Activated CD4-positive, alpha-beta T cell treated with anti-CD3 and anti-CD28 coated beads for 36 hours (primary cell): ENCODE measurements at regions of chr12 and their contacts with region 1.

Region 1: GRCh38 chr12:12916135-12916944 is 25.0 kb downstream of the GPRC5A start:
- DNase-seq: peak; percentile 91
- ATAC-seq: peak; percentile 97
- H3K4me3 Mint-ChIP-seq: no peak overlapping the region
- H3K27ac Mint-ChIP-seq: no peak overlapping the region
- H3K4me1 Mint-ChIP-seq: peaks cover 7% of the 10 kb centered on the region
- H3K27me3 Mint-ChIP-seq: peaks cover 12% of the 10 kb centered on the region

Region 2: GRCh38 chr12:12673296-12673695 is 243.0 kb before region 1 on chr12:
- CTCF ChIA-PET with region 1: no interaction called
- POLR2A ChIA-PET with region 1: no interaction called
- intact Hi-C with region 1: no loop called
- DNase-seq: peak; percentile 47
- ATAC-seq: peak; percentile 91
- H3K4me3 Mint-ChIP-seq: no peak overlapping the region
- H3K27ac Mint-ChIP-seq: peak overlapping the region; percentile 52
- H3K4me1 Mint-ChIP-seq: peaks cover 19% of the 10 kb centered on the region
- H3K27me3 Mint-ChIP-seq: no peaks in the 10 kb centered on the region

Region 3: GRCh38 chr12:12938541-12938940 is 22.2 kb after region 1 on chr12:
- CTCF ChIA-PET with region 1: interaction called, 10 read pairs
- POLR2A ChIA-PET with region 1: no interaction called
- intact Hi-C with region 1: no loop called
- DNase-seq: no peak
- ATAC-seq: no peak
- H3K4me3 Mint-ChIP-seq: no peak overlapping the region
- H3K27ac Mint-ChIP-seq: no peak overlapping the region
- H3K4me1 Mint-ChIP-seq: no peaks in the 10 kb centered on the region
- H3K27me3 Mint-ChIP-seq: no peaks in the 10 kb centered on the region

Region 4: DNA sequence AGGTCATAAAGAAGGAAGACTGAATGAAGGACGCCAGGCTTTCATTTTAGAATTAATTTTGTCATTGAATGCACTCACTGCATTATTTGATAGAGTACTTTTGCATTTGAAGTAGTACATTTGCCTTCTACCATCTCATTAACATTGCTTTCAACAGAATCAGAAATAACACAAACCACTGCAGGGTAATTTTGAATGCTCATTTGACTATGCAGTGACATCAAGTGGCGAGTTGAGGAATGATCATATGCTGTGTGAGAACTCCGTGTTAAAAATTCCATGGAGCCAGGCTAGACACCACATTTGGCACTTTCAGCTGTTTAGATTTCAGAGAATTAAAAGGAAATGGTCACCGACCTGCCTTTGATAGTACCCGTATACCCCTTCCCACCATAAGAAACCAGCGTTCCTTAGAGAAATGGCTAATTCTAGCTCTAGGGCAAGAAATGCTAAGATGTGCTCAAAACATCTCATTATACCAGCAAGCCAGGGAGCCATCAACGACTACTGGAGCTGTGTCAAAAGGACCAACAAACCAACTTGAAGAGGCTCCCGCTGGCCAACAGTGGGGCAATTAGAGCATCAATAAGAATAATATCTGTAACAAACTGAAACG is 67.2 kb after region 1 on chr12:
- CTCF ChIA-PET with region 1: interaction called, 58 read pairs
- POLR2A ChIA-PET with region 1: no interaction called
- intact Hi-C with region 1: loop called (anchors 1 kb)
- DNase-seq: peak; percentile 16
- ATAC-seq: no peak
- H3K4me3 Mint-ChIP-seq: no peak overlapping the region
- H3K27ac Mint-ChIP-seq: no peak overlapping the region
- H3K4me1 Mint-ChIP-seq: no peaks in the 10 kb centered on the region
- H3K27me3 Mint-ChIP-seq: no peaks in the 10 kb centered on the region

Region 5: GRCh38 chr12:13094347-13094746 is 178.0 kb after region 1 on chr12:
- CTCF ChIA-PET with region 1: interaction called, 3 read pairs
- POLR2A ChIA-PET with region 1: no interaction called
- intact Hi-C with region 1: loop called (anchors 1 to 5 kb)
- DNase-seq: no peak
- ATAC-seq: no peak
- H3K4me3 Mint-ChIP-seq: no peak overlapping the region
- H3K27ac Mint-ChIP-seq: no peak overlapping the region
- H3K4me1 Mint-ChIP-seq: peaks cover 26% of the 10 kb centered on the region
- H3K27me3 Mint-ChIP-seq: no peaks in the 10 kb centered on the region

Region 6: DNA sequence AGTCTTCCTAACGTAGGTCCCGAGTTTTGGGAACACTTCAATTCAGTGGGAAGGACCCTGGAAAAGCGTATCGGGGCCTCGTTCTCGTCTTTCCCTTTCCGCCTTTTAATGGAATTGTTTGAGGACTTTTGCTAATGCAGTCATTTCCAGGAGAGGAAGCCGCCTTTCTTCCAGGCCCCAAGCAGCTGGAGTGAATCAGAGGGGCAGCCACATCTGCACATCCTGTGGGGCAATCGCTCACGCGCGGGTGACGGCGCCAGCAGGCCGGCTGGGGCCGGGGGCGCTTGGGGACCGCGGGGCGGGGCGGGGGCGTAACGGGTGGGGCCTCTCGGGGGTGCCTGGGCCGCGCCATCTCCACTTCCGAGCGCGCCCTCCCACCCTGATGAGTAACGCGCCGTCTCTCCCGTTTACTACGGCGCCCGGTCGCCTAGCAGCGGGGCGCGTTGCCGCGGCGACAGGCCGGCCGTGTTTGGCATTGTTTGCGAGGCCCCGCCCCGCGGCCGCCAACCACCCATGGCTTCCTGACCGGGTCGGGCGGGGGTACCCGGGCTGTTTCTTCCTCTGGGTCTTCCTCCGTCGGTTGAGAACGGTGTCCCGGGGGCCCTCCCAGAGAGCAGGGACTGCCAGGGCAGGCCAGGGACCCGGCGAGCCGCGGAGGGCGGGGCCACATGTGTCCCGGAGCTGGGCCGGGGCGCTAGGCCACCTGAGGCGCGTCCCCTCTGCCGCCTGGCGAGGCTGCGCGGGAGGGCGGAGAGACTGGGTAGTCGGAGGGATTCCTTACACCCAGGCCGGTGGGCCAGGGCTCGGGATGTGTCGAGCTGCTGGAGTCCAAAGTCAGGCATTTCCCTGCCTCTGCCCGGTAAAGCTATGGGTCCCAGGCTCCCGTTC is 184.8 kb after region 1 on chr12:
- CTCF ChIA-PET with region 1: interaction called, 4 read pairs
- POLR2A ChIA-PET with region 1: no interaction called
- intact Hi-C with region 1: loop called (anchors 1 to 5 kb)
- DNase-seq: peak; percentile 93
- ATAC-seq: peak; percentile 70
- H3K4me3 Mint-ChIP-seq: peak overlapping the region; percentile 63
- H3K27ac Mint-ChIP-seq: peak overlapping the region; percentile 72
- H3K4me1 Mint-ChIP-seq: peaks cover 58% of the 10 kb centered on the region
- H3K27me3 Mint-ChIP-seq: no peaks in the 10 kb centered on the region

Region 7: DNA sequence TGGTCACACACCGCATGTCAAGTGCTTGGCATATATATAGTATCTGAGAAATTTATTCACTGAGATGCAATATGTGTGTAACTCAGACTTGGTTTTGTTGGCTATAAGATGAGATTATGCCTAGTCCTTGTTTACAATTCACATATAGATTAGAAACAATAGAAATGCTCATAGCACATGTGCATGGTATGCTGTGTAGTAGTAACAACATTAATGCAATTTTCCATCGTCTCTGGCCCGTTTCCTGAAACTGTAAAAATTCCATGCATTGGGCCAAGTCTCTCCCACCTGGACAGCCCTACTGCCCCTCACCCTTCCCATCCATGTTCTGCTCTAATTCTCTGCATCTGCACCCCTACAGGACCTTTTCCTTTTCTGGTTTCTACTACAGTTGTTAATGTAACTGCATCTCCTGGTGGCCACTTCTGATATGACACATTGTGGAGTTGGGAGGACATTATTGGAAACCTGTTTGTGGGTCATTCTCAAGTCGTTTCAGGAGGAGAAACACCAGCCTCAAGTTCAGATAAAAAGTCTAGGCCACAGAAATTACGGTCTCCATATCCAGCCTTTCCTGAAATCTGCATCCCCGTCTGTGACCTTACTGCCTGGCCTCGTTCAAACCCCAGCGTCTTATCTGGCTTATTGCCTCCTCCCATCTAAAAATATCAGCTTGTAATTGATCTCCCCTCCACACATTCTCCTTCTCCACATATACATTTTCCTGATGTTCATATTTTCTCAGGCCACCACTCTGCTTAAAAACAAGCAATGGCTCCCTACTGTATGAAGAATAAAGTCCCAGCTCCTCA is 317.7 kb after region 1 on chr12:
- CTCF ChIA-PET with region 1: no interaction called
- POLR2A ChIA-PET with region 1: no interaction called
- intact Hi-C with region 1: loop called in 1 of 2 experiments (anchors 1 kb)
- DNase-seq: peak; percentile 42
- ATAC-seq: peak; percentile 65
- H3K4me3 Mint-ChIP-seq: no peak overlapping the region
- H3K27ac Mint-ChIP-seq: no peak overlapping the region
- H3K4me1 Mint-ChIP-seq: no peaks in the 10 kb centered on the region
- H3K27me3 Mint-ChIP-seq: peaks cover 2% of the 10 kb centered on the region